Aorta (tissue), 5 donors: ENCODE measurements at regions of chr10 and their contacts with region 1.

Region 1: GRCh38 chr10:103966671-103967447 is at the start of gene SLK:
- DNase-seq: peak; percentile 89 to 94
- ATAC-seq: peak; percentile 95
- H3K4me3 ChIP-seq: peak within 1 kb of the TSS; percentile 87 to 100
- H3K27ac ChIP-seq: peak within 1 kb of the TSS; percentile 80 to 93
- H3K4me1 ChIP-seq: peaks cover 0 to 4% of the 10 kb centered on the region in 2 donors
- H3K27me3 ChIP-seq: no peaks in the 10 kb centered on the region
- total RNA-seq, gene SLK: 47.0 to 50.2 TPM

Region 2: GRCh38 chr10:103678178-103678526 is 288.7 kb before region 1 on chr10:
- intact Hi-C with region 1: no loop called
- DNase-seq: peak; percentile 89 to 92
- ATAC-seq: peak; percentile 71
- H3K4me3 ChIP-seq: no peak overlapping the region
- H3K27ac ChIP-seq: no peak overlapping the region
- H3K4me1 ChIP-seq: no peaks in the 10 kb centered on the region
- H3K27me3 ChIP-seq: no peaks in the 10 kb centered on the region

Region 3: DNA sequence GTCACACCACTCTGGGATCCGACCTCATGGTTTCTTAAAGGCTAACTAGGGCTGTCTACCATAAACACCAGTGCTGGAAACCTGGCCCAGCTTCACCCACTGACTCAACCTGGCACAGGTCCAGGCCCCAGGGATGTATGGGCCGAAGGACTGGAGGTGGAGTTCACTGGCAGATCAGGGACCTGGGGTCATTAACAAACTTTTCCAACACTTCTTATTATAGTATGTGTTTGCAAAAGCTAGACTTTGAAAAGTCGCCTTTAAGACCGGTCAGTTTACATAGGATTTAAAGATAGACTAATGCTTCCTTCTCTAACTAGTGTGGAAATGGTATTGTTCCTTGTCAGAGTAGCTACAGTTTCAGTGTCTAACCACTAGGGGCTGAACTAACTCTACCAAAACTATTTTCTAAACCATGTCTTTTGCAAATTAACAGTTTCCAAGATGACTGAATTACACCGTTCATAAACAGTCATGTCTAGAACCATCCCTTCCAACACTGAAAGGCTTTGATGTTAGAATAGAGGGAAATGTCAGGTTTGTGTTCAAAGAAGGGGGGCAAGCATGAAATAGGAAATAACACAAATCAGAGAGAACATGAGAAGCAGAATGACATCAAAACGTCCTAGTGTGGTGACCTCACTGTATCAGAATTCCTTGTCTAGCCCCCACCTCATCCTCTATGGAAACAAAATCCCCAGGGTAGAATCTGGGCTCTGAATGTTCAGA is 78.6 kb before region 1 on chr10:
- intact Hi-C with region 1: loop called (anchors 5 kb)
- DNase-seq: peak; percentile 85 to 96
- ATAC-seq: peak; percentile 88
- H3K4me3 ChIP-seq: no peak overlapping the region
- H3K27ac ChIP-seq: peak overlapping the region; percentile 60 to 78
- H3K4me1 ChIP-seq: peaks cover 3 to 4% of the 10 kb centered on the region in 2 donors
- H3K27me3 ChIP-seq: no peaks in the 10 kb centered on the region

Region 4: DNA sequence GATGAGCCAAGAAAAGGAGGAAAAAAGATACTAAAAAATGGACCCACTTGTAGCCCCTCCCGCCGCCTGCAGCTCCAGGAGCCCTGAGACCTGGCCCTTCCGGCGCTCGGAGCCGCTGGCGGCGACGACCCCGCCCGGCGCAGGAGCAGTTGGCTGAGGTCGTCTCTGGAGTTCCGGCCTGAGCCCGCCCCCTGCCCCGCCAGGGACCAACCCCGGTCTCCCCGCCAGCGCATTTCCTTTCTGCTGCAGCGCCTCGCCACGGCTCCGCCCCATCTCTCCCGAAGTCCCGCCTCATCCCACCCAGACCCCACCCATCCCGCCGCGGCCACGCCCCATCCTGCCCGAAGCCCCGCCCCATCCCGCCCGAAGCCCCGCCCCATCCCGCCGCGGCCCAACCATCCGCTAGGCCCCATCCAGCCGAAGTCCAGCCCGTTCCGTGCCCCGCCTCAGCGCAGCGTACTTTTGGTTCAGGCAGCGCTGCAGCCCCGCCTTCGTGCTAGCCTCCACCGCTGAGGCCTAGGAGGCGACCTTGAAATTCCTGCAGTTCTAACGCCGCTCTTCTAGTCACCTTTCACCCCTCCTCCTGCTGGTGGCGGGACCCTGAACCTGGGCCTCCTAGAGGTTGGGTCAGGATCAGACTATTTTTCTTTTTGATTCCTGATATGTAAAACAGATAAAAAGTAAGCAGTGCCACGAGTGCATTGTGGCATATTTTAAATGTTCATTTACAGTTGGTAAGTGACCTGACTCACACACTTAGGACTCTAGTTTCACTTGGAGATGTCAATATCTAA is 48.6 kb before region 1 on chr10 and contains the start of gene STN1:
- intact Hi-C with region 1: loop called in 1 of 2 experiments (anchors 2 kb)
- DNase-seq: peak; percentile 98 to 99
- ATAC-seq: peak; percentile 98
- H3K4me3 ChIP-seq: peak within 1 kb of the TSS; percentile 70 to 86
- H3K27ac ChIP-seq: peak within 1 kb of the TSS; percentile 86 to 97
- H3K4me1 ChIP-seq: peaks cover 0 to 2% of the 10 kb centered on the region in 2 donors
- H3K27me3 ChIP-seq: no peaks in the 10 kb centered on the region
- total RNA-seq, gene STN1: 20.3 to 24.2 TPM